ENCODE measurements at regions of chr13 and their contacts with region 1.

Region 1: DNA sequence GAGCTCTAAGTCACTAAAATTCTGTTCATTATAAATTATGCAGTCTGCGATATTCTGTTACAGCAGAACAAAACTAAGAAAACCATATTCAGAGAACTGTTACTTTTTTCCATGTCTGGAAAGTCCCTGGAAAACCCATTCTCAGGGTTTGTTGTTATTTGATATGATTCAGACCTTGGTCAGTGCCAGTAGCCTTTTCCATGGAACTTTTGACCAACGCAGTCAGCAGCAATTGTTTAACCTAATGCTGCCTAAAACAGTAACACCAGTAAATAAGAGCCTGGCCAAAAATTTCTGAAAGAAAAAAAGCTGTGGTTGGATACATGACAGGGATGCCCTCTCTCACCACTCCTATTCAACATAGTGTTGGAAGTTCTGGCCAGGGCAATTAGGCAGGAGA is 402.7 kb downstream of the TBC1D4 start:
- DNase-seq: no peak
- ATAC-seq: no peak
- H3K4me3 ChIP-seq: no peak overlapping the region
- H3K27ac ChIP-seq: no peak overlapping the region
- H3K4me1 ChIP-seq: no peaks in the 10 kb centered on the region
- H3K27me3 ChIP-seq: peaks cover 0 to 2% (median 0%) of the 10 kb centered on the region in 3 donors
- CTCF ChIP-seq: no peak

Region 2: DNA sequence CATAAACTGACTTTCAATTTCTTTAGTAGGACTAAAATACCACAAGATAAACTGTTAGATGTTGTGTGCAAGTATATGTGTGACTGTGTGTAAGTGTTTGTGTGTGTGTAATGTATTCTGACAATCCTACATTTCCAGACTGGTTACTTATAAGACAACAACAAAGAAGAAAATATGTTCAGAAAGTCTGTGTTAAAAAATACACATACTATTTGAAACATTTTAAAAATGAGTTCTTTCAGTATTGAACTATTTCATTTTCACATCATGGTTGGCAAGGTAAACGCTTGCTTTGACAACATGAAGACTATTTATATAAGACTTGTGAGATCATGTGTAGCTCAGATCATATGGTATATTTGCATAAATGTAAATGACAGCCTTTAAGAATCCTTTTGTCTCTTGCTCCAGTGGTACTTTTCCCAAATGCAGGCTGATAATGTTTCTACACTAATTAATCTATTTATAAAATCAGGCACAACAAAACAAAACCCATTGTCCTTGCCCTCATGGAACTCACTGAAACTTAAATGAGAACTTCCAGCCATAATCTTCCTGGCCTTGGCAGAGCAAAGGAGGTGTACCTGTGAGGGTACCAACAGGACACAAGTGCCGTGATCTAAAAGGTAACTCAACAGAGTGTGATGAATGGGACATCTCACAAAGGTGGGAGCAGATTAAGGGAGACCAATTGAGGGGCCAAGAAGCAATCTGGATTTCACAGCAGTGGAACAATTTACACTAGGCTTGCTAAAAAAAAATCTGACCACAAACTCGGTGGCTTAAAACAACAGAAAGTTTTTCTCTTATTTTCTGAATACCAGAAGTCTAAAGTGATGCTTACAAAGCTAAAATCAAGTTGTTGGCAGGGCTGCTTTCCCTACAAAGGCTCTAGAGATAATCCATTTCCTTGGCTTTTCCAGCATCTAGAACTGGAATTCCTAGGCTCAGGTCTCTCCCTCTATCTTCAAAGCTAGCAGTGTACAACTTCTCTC is 53.8 kb after region 1 on chr13:
- intact Hi-C with region 1: loop called in 1 of 2 experiments (anchors 5 kb)
- DNase-seq: no peak
- ATAC-seq: no peak
- H3K4me3 ChIP-seq: no peak overlapping the region
- H3K27ac ChIP-seq: no peak overlapping the region
- H3K4me1 ChIP-seq: no peaks in the 10 kb centered on the region
- H3K27me3 ChIP-seq: peaks cover 0 to 2% (median 0%) of the 10 kb centered on the region in 3 donors
- CTCF ChIP-seq: no peak

Region 3: GRCh38 chr13:75196147-75196837 is 117.1 kb after region 1 on chr13:
- intact Hi-C with region 1: no loop called
- DNase-seq: no peak
- ATAC-seq: peak in 3 of 4 donors; percentile 64 to 91 (median 80)
- H3K4me3 ChIP-seq: peak overlapping the region; percentile 13
- H3K27ac ChIP-seq: no peak overlapping the region
- H3K4me1 ChIP-seq: peaks cover 30% of the 10 kb centered on the region
- H3K27me3 ChIP-seq: no peaks in the 10 kb centered on the region
- CTCF ChIP-seq: no peak